ENCODE measurements at regions of chr5 and their contacts with region 1.

Region 1: GRCh38 chr5:33440482-33441240 is at the start of gene TARS1:
- DNase-seq: peak; percentile 97 to 99
- H3K4me3 ChIP-seq: peak within 1 kb of the TSS; percentile 78 to 92
- H3K27ac ChIP-seq: peak within 1 kb of the TSS; percentile 91 to 93
- H3K4me1 ChIP-seq: peaks cover 7 to 11% of the 10 kb centered on the region in 2 donors
- H3K27me3 ChIP-seq: no peaks in the 10 kb centered on the region
- CTCF ChIP-seq: no peak
- total RNA-seq, gene TARS1: 60.5 TPM

Region 2: GRCh38 chr5:32312647-32313523 is 1127.8 kb before region 1 on chr5 and contains the start of gene MTMR12:
- intact Hi-C with region 1: loop called (anchors 5 kb)
- DNase-seq: peak; percentile 99 to 100
- H3K4me3 ChIP-seq: peak within 1 kb of the TSS; percentile 80 to 95
- H3K27ac ChIP-seq: peak within 1 kb of the TSS; percentile 94 to 95
- H3K4me1 ChIP-seq: peaks cover 6 to 14% of the 10 kb centered on the region in 2 donors
- H3K27me3 ChIP-seq: no peaks in the 10 kb centered on the region
- CTCF ChIP-seq: no peak
- total RNA-seq, gene MTMR12: 19.5 TPM

Region 3: GRCh38 chr5:33343676-33344327 is 96.9 kb before region 1 on chr5:
- intact Hi-C with region 1: loop called (anchors 2 kb)
- DNase-seq: no peak
- H3K4me3 ChIP-seq: no peak overlapping the region
- H3K27ac ChIP-seq: peak overlapping the region; percentile 69 to 81
- H3K4me1 ChIP-seq: peaks cover 0 to 29% of the 10 kb centered on the region in 2 donors
- H3K27me3 ChIP-seq: no peaks in the 10 kb centered on the region
- CTCF ChIP-seq: no peak

Region 4: GRCh38 chr5:33688066-33688465 is 247.4 kb after region 1 on chr5:
- intact Hi-C with region 1: no loop called
- DNase-seq: no peak
- H3K4me3 ChIP-seq: no peak overlapping the region
- H3K27ac ChIP-seq: no peak overlapping the region
- H3K4me1 ChIP-seq: no peaks in the 10 kb centered on the region
- H3K27me3 ChIP-seq: no peaks in the 10 kb centered on the region
- CTCF ChIP-seq: no peak

Region 5: DNA sequence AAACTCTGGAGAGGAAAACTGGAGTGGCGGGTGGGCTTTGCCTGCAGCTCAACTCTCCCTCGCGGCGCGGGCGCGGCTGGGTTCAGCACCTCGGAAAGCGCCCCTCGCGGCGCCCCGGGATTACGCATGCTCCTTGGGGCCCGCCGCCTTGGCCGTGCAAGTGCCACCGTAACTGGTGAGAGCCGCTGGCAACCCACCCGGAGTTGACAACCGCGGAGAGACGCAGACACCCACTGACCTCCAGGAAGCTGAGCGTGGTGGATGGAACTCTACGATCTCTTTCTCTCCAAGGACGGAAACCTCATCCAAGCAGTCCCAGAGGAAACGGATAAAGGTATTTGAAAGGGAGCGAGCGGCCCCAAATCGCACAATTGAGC is 495.3 kb after region 1 on chr5:
- intact Hi-C with region 1: loop called (anchors 10 kb)
- DNase-seq: peak in 1 of 2 donors; percentile 69
- H3K4me3 ChIP-seq: peak overlapping the region; percentile 29 to 48
- H3K27ac ChIP-seq: no peak overlapping the region
- H3K4me1 ChIP-seq: peaks cover 0 to 4% of the 10 kb centered on the region in 2 donors
- H3K27me3 ChIP-seq: peaks cover 17% of the 10 kb centered on the region
- CTCF ChIP-seq: peak in 2 of 3 experiments; percentile 7 to 26

Region 6: DNA sequence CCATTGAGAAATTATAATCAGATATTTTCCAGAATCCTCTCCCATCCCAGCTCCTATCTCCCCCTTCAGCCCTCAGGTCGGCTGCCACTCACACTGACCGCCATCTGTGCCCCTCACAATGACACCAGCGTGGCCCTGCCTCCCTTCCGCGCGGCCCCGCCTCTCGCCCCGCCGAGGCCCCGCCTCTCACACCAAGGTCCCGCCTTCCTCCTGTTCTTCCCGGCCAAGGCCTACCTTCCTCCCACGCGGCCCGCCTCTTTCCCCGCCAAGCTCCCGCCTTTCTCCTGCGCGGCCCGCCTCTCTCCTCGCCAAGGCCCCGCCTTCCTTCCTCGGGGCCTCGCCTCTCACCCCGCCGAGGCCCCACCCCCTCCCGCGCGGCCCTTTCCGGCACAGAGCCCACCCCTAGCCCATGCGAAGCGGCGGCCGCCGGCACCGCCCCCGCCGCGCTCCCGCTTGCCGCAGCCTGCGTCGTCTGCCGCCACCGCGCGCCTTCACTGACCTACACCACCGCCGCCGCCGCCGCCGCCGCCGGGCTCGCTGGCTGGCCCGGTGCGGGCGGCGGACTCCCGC is 1488.6 kb after region 1 on chr5 and contains the start of gene DNAJC21:
- intact Hi-C with region 1: loop called (anchors 2 kb)
- DNase-seq: peak; percentile 92 to 99
- H3K4me3 ChIP-seq: peak within 1 kb of the TSS; percentile 64 to 72
- H3K27ac ChIP-seq: peak within 1 kb of the TSS; percentile 87 to 98
- H3K4me1 ChIP-seq: peaks cover 0 to 15% of the 10 kb centered on the region in 2 donors
- H3K27me3 ChIP-seq: no peaks in the 10 kb centered on the region
- CTCF ChIP-seq: no peak
- total RNA-seq, gene DNAJC21: 30.5 TPM